Tibial artery (tissue), 4 donors: ENCODE measurements at regions of chr19 and their contacts with region 1.

Region 1: GRCh38 chr19:36054119-36054732 is at the start of gene THAP8:
- DNase-seq: peak; percentile 100
- H3K4me3 ChIP-seq: peak within 1 kb of the TSS; percentile 56 to 67
- H3K27ac ChIP-seq: peak within 1 kb of the TSS; percentile 84 to 85
- H3K4me1 ChIP-seq: peaks cover 0 to 14% (median 8%) of the 10 kb centered on the region in 4 donors
- H3K27me3 ChIP-seq: no peaks in the 10 kb centered on the region
- CTCF ChIP-seq: peak; percentile 62 to 64

Region 2: DNA sequence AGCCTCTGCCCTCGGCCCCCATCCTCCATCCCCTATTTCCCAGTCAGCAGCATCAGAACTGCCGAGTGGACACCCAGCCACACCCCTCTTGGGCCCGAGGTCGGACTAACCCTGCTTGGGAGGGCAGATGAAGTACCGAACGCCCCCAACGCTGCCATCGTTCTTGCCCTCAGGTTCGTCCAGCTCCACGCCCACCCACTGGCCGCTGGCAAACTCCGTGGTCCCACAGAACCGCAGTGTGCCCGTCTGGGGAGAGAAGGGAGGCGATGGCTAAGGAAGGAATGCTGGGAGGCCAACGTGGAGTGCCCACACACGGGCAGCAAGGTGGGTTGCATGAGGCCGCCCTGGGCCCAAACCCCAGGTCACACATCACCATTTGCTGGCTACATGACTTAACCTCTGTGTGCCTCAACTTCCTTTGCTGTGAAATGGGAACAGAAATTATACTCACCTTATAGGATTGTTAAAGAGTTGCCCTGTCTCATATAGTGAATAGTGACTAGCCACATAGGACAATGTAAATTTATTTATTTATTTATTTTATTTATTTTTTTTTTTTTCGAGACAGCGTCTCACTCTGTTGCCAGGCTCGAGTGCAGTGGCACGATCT is 35.1 kb before region 1 on chr19:
- intact Hi-C with region 1: loop called (anchors 5 kb)
- DNase-seq: no peak
- H3K4me3 ChIP-seq: no peak overlapping the region
- H3K27ac ChIP-seq: no peak overlapping the region
- H3K4me1 ChIP-seq: peaks cover 0 to 10% (median 5%) of the 10 kb centered on the region in 4 donors
- H3K27me3 ChIP-seq: no peaks in the 10 kb centered on the region
- CTCF ChIP-seq: no peak

Region 3: DNA sequence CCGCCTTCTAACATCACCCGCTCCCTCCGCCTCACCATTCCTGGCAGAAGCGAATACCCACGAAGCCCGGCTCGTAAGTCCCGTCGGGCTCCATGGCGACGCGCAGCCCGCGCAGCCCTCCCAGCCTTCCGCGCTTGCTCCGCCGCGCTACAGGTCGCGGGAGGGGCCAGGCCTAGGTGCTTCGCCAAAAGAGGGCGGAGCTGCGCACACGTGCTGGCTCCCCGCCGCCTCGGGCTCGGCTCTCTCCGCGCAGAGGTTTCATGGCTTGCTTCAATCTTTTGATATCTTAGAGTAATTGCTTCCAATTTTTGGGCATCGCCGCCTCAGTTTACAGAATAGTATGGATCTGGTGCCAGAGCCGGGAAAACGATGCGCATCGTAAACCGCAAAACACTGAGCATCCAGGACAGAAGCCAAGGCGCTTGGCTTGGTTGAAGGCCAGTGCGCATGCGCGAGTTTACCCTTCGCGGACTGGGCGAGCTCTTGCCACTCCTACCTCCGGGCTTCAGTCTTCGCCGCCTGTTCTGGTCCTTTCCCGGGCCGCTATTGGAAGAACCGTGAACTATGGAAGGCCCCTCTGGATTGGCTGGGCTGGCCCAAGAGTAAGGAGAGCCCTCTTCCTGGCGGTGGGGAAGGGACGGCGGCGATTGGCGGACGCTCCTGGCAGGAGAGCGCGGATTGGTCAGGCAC is 60.7 kb after region 1 on chr19 and contains the start of gene POLR2I:
- intact Hi-C with region 1: loop called (anchors 5 kb)
- DNase-seq: peak; percentile 100
- H3K4me3 ChIP-seq: peak within 1 kb of the TSS; percentile 60 to 83
- H3K27ac ChIP-seq: peak within 1 kb of the TSS; percentile 84 to 86
- H3K4me1 ChIP-seq: peaks cover 0 to 26% (median 23%) of the 10 kb centered on the region in 4 donors
- H3K27me3 ChIP-seq: no peaks in the 10 kb centered on the region
- CTCF ChIP-seq: peak in 1 of 2 experiments; percentile 15